ENCODE measurements at regions of chr1 and their contacts with region 1.

Region 1: DNA sequence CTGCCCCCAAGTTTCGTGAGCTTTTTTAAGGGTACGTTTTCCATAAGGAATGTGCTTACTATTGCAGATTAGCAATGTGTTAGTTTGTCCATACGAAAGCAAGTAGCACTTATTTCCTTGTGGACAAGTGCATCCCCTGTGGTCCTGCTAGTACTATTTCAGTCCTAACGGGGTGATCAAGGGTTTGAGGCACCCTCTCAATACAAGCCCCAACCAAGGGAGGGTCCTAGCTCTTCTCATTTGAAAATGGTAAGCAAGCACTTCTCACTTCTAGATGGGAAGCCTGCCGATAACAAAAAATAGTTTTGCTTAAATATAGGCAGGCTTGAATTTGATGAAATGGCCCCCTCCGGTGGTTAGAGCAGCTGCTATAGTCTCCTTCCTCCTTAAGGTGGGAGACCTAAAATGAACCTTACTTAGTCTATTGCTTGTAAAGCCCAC is 64.0 kb upstream of the HMCN1 start:
- DNase-seq: peak; percentile 76
- ATAC-seq: peak; percentile 74
- H3K4me3 Mint-ChIP-seq: no peak overlapping the region
- H3K27ac Mint-ChIP-seq: no peak overlapping the region
- H3K4me1 Mint-ChIP-seq: peaks cover 52% of the 10 kb centered on the region
- H3K27me3 Mint-ChIP-seq: no peaks in the 10 kb centered on the region

Region 2: DNA sequence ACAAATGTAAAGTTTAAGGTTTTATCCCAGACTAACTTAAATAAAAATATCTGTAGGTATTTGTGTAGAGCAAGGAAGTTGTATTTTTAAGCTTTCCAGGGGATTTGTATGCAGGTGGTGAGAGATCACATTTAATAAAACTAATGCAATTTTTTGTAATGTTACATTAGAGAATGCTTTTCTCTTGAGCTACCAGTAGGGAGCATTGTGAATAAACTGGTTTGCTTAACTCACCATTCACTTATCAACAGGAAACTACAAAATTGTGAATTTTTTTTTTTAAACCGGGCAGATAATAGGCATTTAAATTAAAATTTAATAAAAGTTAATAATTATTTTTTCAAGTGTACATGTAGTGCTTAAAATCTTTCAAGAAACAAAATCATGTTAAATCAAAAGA is 431.8 kb before region 1 on chr1:
- CTCF ChIA-PET with region 1: interaction called, 21 read pairs
- POLR2A ChIA-PET with region 1: no interaction called
- DNase-seq: no peak
- ATAC-seq: no peak
- H3K4me3 Mint-ChIP-seq: no peak overlapping the region
- H3K27ac Mint-ChIP-seq: no peak overlapping the region
- H3K4me1 Mint-ChIP-seq: peaks cover 17% of the 10 kb centered on the region
- H3K27me3 Mint-ChIP-seq: no peaks in the 10 kb centered on the region

Region 3: DNA sequence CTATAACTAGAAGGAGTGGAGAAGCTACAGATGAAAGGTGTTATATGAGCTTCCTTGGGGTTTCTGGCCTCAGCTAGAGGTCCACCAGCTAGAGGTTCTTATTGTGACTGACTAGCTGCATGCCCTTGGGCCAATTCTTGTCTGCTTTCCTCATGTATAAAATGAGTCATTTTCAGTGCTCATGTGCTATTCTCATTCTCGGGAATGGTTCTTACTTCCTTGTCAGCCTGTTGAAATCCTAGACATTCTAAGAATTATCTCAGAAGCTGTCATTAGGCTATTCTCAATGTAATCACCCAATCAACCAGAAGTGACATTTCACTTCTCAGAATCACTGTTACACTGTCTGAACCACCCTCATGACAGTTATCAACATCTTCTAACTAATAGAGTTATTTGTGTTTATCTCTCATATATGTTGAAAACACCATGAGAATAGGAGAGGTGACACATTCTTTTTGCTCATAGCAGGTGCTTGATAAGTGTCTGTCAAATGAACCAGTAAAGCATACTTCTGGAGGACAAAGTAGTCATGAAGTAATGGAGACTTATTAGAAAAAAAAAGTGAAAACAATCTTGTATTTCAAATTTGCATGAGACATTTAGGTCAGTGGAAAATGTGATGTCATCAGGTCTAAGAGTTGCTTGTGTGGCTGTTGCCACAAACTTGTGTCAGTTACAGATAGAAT is 230.3 kb before region 1 on chr1:
- CTCF ChIA-PET with region 1: interaction called, 12 read pairs
- POLR2A ChIA-PET with region 1: no interaction called
- DNase-seq: peak; percentile 72
- ATAC-seq: peak; percentile 83
- H3K4me3 Mint-ChIP-seq: no peak overlapping the region
- H3K27ac Mint-ChIP-seq: no peak overlapping the region
- H3K4me1 Mint-ChIP-seq: peaks cover 36% of the 10 kb centered on the region
- H3K27me3 Mint-ChIP-seq: no peaks in the 10 kb centered on the region

Region 4: GRCh38 chr1:185566995-185567394 is 103.2 kb before region 1 on chr1:
- CTCF ChIA-PET with region 1: interaction called, 54 read pairs
- POLR2A ChIA-PET with region 1: no interaction called
- DNase-seq: peak; percentile 79
- ATAC-seq: peak; percentile 84
- H3K4me3 Mint-ChIP-seq: peak overlapping the region; percentile 29
- H3K27ac Mint-ChIP-seq: peak overlapping the region; percentile 76
- H3K4me1 Mint-ChIP-seq: peaks cover 70% of the 10 kb centered on the region
- H3K27me3 Mint-ChIP-seq: no peaks in the 10 kb centered on the region

Region 5: GRCh38 chr1:185636848-185637247 is 33.4 kb before region 1 on chr1:
- CTCF ChIA-PET with region 1: interaction called, 14 read pairs
- POLR2A ChIA-PET with region 1: no interaction called
- DNase-seq: peak; percentile 75
- ATAC-seq: peak; percentile 92
- H3K4me3 Mint-ChIP-seq: peak overlapping the region; percentile 12
- H3K27ac Mint-ChIP-seq: peak overlapping the region; percentile 80
- H3K4me1 Mint-ChIP-seq: peaks cover 31% of the 10 kb centered on the region
- H3K27me3 Mint-ChIP-seq: no peaks in the 10 kb centered on the region

Region 6: DNA sequence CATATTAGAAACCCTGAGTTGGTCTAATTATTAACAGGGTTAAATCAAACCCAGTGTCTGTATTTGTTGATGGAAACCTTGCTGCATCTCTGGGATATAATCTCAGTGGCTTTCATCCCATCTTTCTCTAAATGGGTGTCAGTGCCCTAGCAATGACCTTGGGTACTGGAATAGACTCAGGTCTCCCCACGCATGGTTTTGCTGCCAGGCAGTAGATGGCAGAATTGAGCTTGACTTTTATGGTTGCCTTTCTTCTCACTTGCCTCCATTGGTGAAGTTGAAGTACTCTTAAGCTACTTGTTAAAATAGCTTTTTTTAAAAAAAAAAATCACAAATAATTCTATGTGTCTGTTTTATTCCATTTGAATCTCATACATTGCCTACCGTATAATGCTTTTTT is 17.9 kb before region 1 on chr1:
- CTCF ChIA-PET with region 1: interaction called, 35 read pairs
- POLR2A ChIA-PET with region 1: no interaction called
- DNase-seq: no peak
- ATAC-seq: no peak
- H3K4me3 Mint-ChIP-seq: no peak overlapping the region
- H3K27ac Mint-ChIP-seq: no peak overlapping the region
- H3K4me1 Mint-ChIP-seq: peaks cover 10% of the 10 kb centered on the region
- H3K27me3 Mint-ChIP-seq: no peaks in the 10 kb centered on the region

Measured in activated CD8-positive, alpha-beta T cell treated with anti-CD3 and anti-CD28 coated beads, Interleukin-2, amount 10 ng/mL, durations not matched to agents 7 days and 5 days (primary cell).